ENCODE measurements at regions of chr13 and their contacts with region 1.

Region 1: GRCh38 chr13:75482070-75482819 is at the start of gene TBC1D4:
- DNase-seq: peak; percentile 82
- CTCF ChIP-seq: peak; percentile 77

Region 2: DNA sequence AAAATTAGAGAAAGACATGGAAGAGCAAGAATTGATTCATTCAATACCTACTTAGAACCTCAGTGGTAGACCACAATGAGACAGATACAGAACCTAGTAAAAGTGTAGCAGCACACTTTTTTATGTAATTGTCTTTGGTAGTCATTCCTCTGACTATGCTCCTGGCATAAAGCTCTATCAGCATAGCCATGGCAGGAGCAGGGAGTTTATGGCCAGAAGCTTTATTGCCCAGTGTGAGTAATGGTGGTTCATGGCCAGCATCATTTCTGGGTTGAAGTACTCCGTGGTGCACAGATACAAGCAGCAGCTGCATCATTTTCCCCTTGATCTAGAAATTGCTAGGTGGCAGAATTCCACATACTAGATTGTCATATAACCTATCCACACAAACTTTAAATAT is 352.9 kb before region 1 on chr13:
- CTCF ChIA-PET with region 1: no interaction called
- POLR2A ChIA-PET with region 1: no interaction called
- DNase-seq: no peak
- CTCF ChIP-seq: no peak

Region 3: GRCh38 chr13:75258159-75258782 is 224.0 kb before region 1 on chr13:
- CTCF ChIA-PET with region 1: no interaction called
- POLR2A ChIA-PET with region 1: no interaction called
- DNase-seq: no peak
- CTCF ChIP-seq: peak; percentile 38

Region 4: GRCh38 chr13:75365724-75366173 is 116.5 kb before region 1 on chr13:
- CTCF ChIA-PET with region 1: interaction called, 59 read pairs
- POLR2A ChIA-PET with region 1: no interaction called
- DNase-seq: peak; percentile 52
- CTCF ChIP-seq: no peak

Region 5: DNA sequence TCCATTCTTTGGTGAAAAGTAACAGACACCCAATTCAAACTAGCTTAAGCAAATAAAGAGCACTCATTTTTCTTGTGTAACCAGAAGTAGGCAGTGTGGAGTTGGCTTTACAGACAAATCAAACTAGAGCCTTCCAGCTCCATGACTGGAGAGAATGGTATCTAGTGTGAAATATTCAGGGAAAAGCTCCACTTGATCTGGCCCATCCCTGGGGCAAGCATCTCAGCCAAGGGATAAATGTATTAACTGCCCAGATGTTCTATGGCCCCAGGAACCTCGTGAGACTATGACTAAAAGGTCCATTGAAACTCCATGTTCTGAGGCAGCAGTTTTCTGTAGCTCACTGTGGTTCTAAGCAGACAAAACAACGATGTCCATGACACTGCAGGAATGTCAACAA is 50.2 kb before region 1 on chr13:
- CTCF ChIA-PET with region 1: interaction called, 18 read pairs
- POLR2A ChIA-PET with region 1: no interaction called
- DNase-seq: no peak
- CTCF ChIP-seq: peak; percentile 3

Region 6: GRCh38 chr13:75495938-75496337 is 13.7 kb after region 1 on chr13:
- CTCF ChIA-PET with region 1: interaction called, 47 read pairs
- POLR2A ChIA-PET with region 1: interaction called, 3 read pairs
- DNase-seq: no peak
- CTCF ChIP-seq: no peak

Region 7: DNA sequence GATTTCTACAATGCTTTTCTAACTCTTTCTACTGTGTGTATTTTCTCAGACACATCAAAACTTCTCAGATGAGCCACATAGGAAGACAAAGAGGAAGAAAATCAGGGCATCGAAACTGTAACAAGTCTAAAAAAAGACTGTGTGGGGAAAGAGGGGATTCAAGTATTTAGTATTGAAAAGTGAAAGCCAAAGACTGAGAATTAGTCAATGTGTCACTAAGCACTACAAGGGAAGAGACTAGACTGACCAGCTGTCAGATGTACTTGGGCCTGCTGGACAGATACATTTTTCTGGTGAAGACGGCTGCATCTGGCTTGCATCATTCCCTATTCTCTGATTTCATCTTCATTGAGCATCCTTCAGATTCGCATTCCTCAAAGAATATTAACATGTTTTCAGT is 30.0 kb after region 1 on chr13:
- CTCF ChIA-PET with region 1: interaction called, 10 read pairs
- POLR2A ChIA-PET with region 1: no interaction called
- DNase-seq: peak; percentile 68
- CTCF ChIP-seq: no peak

Region 8: DNA sequence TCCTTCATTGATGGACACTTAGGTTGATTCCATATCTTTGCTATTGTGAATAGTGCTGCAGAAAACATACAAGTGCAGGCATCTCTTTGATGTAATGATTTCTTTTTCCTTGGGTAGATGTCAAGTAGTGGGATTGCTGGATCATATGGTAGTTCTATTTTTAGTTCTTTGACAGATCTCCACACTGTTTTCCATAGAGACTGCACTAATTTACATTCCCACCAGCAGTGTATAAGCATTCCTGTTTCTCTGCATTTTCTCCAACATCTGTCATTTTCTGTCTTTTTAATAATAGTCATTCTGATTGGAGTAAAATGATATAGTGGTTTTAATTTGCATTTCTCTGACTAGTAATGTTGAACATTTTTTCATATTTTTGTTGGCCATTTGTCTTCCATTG is 270.6 kb after region 1 on chr13:
- CTCF ChIA-PET with region 1: no interaction called
- POLR2A ChIA-PET with region 1: no interaction called
- DNase-seq: no peak
- CTCF ChIP-seq: no peak